ENCODE measurements at regions of chr9 and their contacts with region 1.

Region 1: DNA sequence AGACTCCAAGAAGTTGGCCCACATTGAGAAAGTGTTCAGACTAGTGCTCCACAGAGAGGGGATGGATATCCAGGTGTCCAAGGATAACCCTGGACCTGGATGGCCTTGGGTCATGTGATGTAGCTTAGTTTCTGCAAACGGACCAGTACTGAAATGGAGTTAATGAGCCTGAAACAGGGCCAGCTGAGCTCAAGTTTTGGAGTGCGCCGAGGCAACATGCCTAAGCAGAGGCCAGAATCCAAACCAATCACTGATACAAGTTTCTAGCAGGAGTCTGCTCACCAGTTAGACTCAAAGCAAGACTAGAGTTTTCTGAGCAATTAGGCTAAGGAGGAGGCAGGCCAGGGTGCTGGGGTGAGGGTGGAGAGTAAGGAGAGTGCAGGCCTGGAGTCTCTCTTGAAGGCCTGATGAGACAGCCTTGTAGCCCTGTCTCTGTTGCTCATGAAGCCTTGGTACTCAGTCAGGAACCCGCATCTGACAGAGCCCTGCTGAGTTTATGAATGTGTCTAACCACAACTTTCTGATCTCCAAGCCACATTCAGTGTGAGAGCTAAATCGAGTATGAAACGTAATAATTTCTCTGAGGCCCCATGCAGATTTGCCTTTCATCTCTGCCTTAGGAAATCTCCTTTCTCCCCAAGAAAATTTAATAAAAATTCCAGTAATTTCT is 68.9 kb upstream of the EQTN start:
- DNase-seq: peak in 7 of 9 donors; percentile 2 to 55 (median 11)
- ATAC-seq: peak; percentile 49
- H3K4me3 ChIP-seq: no peak overlapping the region
- H3K4me3 Mint-ChIP-seq: peak overlapping the region in 4 of 10 donors; percentile 28 to 81 (median 32)
- H3K27ac ChIP-seq: no peak overlapping the region
- H3K27ac Mint-ChIP-seq: peak overlapping the region in 2 of 9 donors; percentile 7 to 85
- H3K4me1 ChIP-seq: peaks cover 0 to 18% of the 10 kb centered on the region in 2 donors
- H3K4me1 Mint-ChIP-seq: peaks cover 20 to 50% (median 26%) of the 10 kb centered on the region in 7 donors
- H3K27me3 ChIP-seq: peaks cover 0 to 3% of the 10 kb centered on the region in 2 donors
- H3K27me3 Mint-ChIP-seq: peaks cover 0 to 8% (median 7%) of the 10 kb centered on the region in 5 donors

Region 2: DNA sequence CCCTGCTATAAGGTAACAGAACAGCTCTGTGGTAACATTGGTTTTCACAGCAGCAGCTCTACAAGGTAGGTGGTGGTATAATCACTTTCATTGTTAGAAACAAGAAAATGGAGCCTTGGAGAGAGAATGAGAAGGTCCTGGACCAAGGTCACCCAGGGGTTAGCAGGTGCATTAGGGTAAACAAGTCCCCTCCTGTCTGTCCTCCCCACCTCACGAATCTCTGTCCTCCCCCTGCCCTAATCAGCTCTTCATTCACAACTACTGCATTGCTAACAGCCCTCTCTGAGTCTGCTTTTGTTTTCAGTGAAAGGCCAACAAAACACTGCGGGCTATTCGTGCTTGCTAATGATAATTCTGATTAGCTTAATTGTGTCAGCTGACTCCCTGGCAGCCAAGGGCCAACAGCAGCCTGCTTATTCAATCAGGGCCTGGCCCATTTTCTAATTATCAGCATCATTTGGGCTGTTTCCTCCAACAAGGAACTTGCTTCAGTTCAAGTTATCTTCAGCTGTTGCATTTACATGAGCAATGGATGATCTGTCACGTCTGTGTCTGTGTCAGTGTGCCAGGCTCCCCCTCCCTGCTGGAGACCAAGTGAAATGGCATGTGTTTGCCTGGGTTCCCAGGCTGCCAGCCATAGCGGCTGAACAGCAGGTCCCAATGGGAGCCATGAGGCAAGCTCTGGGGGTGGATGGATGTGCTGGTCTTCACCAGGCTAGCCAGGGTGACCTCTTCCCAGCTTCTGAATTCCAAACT is 12.2 kb before region 1 on chr9:
- CTCF ChIA-PET with region 1: no interaction called
- POLR2A ChIA-PET with region 1: no interaction called
- intact Hi-C with region 1: loop called in 1 of 2 experiments (anchors 1 kb)
- DNase-seq: no peak
- ATAC-seq: no peak
- H3K4me3 ChIP-seq: no peak overlapping the region
- H3K4me3 Mint-ChIP-seq: no peak overlapping the region
- H3K27ac ChIP-seq: no peak overlapping the region
- H3K27ac Mint-ChIP-seq: peak overlapping the region in 1 of 9 donors; percentile 62
- H3K4me1 ChIP-seq: no peaks in the 10 kb centered on the region
- H3K4me1 Mint-ChIP-seq: peaks cover 0 to 48% (median 8%) of the 10 kb centered on the region in 7 donors
- H3K27me3 ChIP-seq: no peaks in the 10 kb centered on the region
- H3K27me3 Mint-ChIP-seq: no peaks in the 10 kb centered on the region

Region 3: DNA sequence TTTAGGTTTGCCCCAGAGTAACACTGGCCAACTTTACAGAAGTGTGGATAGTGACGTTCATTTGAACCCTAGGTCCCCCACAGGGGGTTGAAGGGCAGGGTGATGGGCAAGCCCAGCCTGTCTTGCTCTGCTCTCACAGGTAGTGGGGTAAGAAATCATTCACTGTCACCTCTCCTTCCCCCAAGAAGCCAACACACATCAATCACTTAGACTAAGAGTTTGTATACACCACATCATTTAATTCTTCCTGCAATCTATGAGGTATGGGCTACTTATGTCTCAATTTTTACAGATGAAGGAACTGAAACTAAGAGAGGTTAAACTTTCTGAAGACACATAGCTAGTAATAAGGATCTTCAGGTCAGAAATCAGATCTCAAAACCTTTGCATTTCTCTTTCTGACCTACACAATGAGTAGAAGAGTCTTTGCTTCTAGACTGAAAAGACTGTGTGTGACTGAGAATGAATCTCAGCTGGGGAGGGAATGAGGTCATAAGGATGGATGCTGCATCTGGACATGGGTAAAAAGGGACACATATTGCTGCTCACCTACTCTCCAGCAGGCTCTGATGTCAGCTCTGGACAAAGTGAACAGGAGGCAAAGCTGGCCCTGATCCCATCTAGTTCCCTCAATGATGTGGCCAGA is 12.1 kb after region 1 on chr9:
- CTCF ChIA-PET with region 1: no interaction called
- POLR2A ChIA-PET with region 1: no interaction called
- intact Hi-C with region 1: loop called in 1 of 2 experiments (anchors 1 kb)
- DNase-seq: no peak
- ATAC-seq: peak; percentile 64
- H3K4me3 ChIP-seq: no peak overlapping the region
- H3K4me3 Mint-ChIP-seq: no peak overlapping the region
- H3K27ac ChIP-seq: no peak overlapping the region
- H3K27ac Mint-ChIP-seq: peak overlapping the region in 1 of 9 donors; percentile 20
- H3K4me1 ChIP-seq: no peaks in the 10 kb centered on the region
- H3K4me1 Mint-ChIP-seq: peaks cover 4 to 31% (median 5%) of the 10 kb centered on the region in 7 donors
- H3K27me3 ChIP-seq: no peaks in the 10 kb centered on the region
- H3K27me3 Mint-ChIP-seq: peaks cover 0 to 9% (median 0%) of the 10 kb centered on the region in 5 donors

Region 4: GRCh38 chr9:27388150-27388549 is 22.3 kb after region 1 on chr9:
- CTCF ChIA-PET with region 1: no interaction called
- POLR2A ChIA-PET with region 1: no interaction called
- intact Hi-C with region 1: no loop called
- DNase-seq: no peak
- ATAC-seq: no peak
- H3K4me3 ChIP-seq: no peak overlapping the region
- H3K4me3 Mint-ChIP-seq: no peak overlapping the region
- H3K27ac ChIP-seq: no peak overlapping the region
- H3K27ac Mint-ChIP-seq: no peak overlapping the region
- H3K4me1 ChIP-seq: no peaks in the 10 kb centered on the region
- H3K4me1 Mint-ChIP-seq: no peaks in the 10 kb centered on the region
- H3K27me3 ChIP-seq: no peaks in the 10 kb centered on the region
- H3K27me3 Mint-ChIP-seq: peaks cover 0 to 6% (median 0%) of the 10 kb centered on the region in 5 donors

Measured in naive thymus-derived CD4-positive, alpha-beta T cell (primary cell).